GM12878 (cell line): ENCODE measurements at regions of chr5 and their contacts with region 1.

Region 1: GRCh38 chr5:73625944-73626811 is at the start of gene ARHGEF28:
- DNase-seq: no peak
- ATAC-seq: peak; percentile 84
- H3K4me3 ChIP-seq: peak within 1 kb of the TSS; percentile 71
- H3K27ac ChIP-seq: no peak within 1 kb of the TSS
- H3K4me1 ChIP-seq: no peaks in the 10 kb centered on the region
- H3K27me3 ChIP-seq: peaks cover 0 to 5% of the 10 kb centered on the region in 2 experiments; a peak in 2 of 4 replicates
- CTCF ChIP-seq: no peak
- EP300 ChIP-seq: no peak
- POLR2A ChIP-seq: no peak
- RAD21 ChIP-seq: no peak
- polyA plus RNA-seq, gene ARHGEF28: not detected

Region 2: GRCh38 chr5:73605227-73606020 is 20.8 kb before region 1 on chr5:
- CTCF ChIA-PET with region 1: interaction called, 3 read pairs
- POLR2A ChIA-PET with region 1: no interaction called
- RAD21 ChIA-PET with region 1: no interaction called
- SMC1A ChIA-PET with region 1: interaction called, 11 read pairs
- in situ Hi-C with region 1: no loop called
- intact Hi-C with region 1: no loop called
- DNase-seq: no peak
- ATAC-seq: no peak
- H3K4me3 ChIP-seq: no peak overlapping the region
- H3K27ac ChIP-seq: no peak overlapping the region
- H3K4me1 ChIP-seq: no peaks in the 10 kb centered on the region
- H3K27me3 ChIP-seq: no peaks in the 10 kb centered on the region
- CTCF ChIP-seq: no peak
- EP300 ChIP-seq: no peak
- POLR2A ChIP-seq: no peak
- RAD21 ChIP-seq: no peak

Region 3: DNA sequence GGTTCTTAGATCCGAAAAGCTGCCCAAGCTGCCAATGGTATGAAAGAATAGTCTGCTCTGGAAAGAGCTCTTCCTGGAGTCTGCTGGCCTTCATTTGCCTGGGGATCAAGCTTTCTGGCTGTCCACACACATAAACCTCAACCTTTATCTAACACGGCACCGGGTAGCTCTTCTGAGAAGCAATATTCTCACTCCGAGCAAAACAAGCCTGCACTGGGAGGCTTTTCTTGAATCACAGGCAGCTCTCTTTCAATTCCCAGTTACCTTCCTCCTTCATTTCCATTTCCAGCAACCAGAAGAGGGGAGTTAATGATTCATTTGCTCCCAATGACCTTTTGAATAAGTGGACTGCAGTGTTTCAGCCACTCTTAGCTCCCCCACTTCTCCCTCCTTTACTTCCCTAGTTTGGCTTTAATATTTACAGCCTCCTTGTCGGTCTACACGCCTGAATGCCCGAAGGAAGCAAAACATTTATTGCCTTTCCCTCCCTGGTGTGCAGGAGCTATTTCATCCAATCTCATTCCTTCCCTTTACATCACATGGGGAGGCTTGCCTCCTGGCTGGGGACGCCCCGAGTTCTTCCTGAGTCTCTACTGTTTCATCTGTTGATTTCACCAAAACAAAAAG is 186.9 kb after region 1 on chr5:
- CTCF ChIA-PET with region 1: no interaction called
- POLR2A ChIA-PET with region 1: no interaction called
- RAD21 ChIA-PET with region 1: no interaction called
- SMC1A ChIA-PET with region 1: no interaction called
- in situ Hi-C with region 1: no loop called
- intact Hi-C with region 1: no loop called
- DNase-seq: no peak
- ATAC-seq: no peak
- H3K4me3 ChIP-seq: no peak overlapping the region
- H3K27ac ChIP-seq: no peak overlapping the region
- H3K4me1 ChIP-seq: no peaks in the 10 kb centered on the region
- H3K27me3 ChIP-seq: no peaks in the 10 kb centered on the region; a peak in 1 of 4 replicates
- CTCF ChIP-seq: no peak
- EP300 ChIP-seq: no peak
- POLR2A ChIP-seq: no peak
- RAD21 ChIP-seq: no peak

Region 4: GRCh38 chr5:73945498-73945897 is 319.3 kb after region 1 on chr5:
- CTCF ChIA-PET with region 1: no interaction called
- POLR2A ChIA-PET with region 1: no interaction called
- RAD21 ChIA-PET with region 1: no interaction called
- SMC1A ChIA-PET with region 1: no interaction called
- in situ Hi-C with region 1: no loop called
- intact Hi-C with region 1: no loop called
- DNase-seq: no peak
- ATAC-seq: no peak
- H3K4me3 ChIP-seq: no peak overlapping the region
- H3K27ac ChIP-seq: no peak overlapping the region
- H3K4me1 ChIP-seq: no peaks in the 10 kb centered on the region
- H3K27me3 ChIP-seq: no peaks in the 10 kb centered on the region; a peak in 1 of 4 replicates
- CTCF ChIP-seq: peak in 2 of 3 experiments; percentile 31 to 47; a peak in 4 of 6 replicates
- EP300 ChIP-seq: no peak
- POLR2A ChIP-seq: no peak
- RAD21 ChIP-seq: no peak